Posterior vena cava (tissue), 2 donors: ENCODE measurements at regions of chr13 and their contacts with region 1.

Region 1: DNA sequence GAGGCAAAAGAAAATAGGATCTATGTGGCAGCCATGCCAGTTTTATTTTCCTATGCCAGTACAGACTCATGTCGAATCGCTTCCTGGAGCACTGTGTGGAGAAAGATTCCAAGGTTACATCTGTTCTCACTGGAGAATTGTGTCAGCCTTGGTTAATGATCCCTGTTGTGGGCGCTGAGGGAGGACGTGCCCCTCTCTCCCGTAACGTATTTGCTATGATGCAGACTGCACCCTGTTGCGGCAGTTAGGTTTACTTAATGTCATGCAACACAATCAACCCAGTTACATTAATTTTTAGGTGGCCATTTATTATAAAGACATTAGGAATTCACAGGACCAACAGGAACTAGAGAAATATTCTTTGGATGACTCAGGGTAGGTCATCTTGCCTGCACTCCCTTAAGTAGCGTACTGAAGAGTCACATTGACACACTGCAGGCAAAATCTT is 892.9 kb downstream of the EFNB2 start:
- DNase-seq: no peak

Region 2: GRCh38 chr13:103663996-103664395 is 1978.5 kb before region 1 on chr13:
- intact Hi-C with region 1: no loop called
- DNase-seq: no peak

Region 3: DNA sequence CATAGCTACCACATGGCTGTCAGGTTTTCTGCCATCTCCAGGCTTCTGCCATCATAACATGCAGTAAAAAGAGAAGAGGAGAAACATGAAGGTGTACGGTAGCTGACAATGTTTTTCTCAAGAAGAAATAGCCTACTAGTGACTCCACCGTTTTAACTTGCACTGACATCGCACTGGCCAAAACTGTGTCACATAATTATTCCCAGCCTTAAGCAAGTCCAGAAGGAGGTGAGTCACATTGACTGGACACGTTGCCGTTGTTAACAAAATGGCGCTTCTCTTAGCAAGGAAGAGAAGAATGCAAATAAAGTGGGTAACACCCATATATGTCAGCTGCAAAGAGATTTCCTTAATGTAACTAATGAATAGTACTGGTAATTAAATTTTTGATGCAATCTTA is 1766.0 kb before region 1 on chr13:
- intact Hi-C with region 1: loop called in 1 of 2 experiments (anchors 10 kb)
- DNase-seq: no peak

Region 4: DNA sequence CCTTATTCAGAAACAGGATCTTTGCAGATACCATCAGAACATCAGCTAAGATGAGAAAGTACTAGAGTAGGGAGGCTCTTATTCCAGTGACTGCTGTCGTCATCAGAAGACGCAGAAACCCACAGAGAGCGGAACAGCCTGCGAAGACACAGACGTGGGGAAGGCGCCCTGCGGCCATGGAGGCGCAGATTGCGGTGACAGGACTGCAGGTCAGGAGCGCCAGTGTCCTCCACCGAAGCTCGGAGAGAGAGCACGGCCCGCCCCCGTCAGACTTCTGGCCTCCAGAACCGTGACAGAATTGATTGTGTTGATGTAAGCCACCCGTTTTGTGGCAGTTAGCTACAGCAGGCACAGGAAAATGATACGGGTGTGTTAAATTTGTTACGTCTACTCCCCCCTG is 617.4 kb after region 1 on chr13:
- intact Hi-C with region 1: loop called in 1 of 2 experiments (anchors 5 kb)
- DNase-seq: no peak